Stomach (tissue), 19 donors: ENCODE measurements at regions of chr21 and their contacts with region 1.

Region 1: DNA sequence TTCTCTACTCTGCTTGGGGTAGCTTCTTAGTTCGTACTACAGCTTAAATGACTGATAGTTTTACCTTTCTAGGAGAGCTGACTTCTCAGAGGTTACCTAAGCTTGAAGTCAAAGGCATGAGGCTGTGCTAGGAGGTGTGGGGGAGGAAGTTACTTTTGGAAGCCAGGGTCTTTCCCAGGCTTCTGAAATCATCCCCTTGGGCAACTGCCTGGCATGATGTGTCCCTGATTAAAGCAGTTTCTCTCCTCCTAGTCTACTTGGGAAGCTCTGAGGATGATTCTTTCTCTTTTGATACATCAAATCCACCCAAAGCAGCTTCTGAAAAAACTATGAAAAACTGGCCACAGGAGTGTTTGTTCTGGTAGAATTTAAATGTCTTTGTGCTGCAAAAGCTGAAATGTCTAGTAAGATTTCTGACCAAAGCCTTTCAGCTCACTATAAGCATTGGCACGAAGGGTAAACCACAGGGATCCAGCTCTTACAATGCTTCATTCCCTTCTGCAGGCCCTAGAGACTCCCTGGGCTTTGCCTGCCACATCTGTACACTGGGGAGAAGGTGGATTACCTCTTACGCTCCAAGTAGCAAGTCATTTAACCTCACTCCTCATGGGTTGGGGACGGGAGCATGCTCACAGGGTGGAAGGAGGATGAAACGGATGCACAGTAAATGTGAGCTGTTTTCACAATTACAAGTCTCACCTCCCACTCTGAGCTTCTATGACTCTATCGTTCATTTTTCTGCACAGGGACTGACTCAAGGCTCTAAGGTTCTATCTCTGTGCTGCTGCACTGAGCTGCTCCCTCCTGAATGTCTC is 59.6 kb downstream of the RUNX1 start:
- DNase-seq: no peak
- H3K4me3 ChIP-seq: no peak overlapping the region
- H3K27ac ChIP-seq: peak overlapping the region in 1 of 5 donors; percentile 3
- H3K4me1 ChIP-seq: peaks cover 0 to 4% (median 0%) of the 10 kb centered on the region in 4 donors
- H3K27me3 ChIP-seq: no peaks in the 10 kb centered on the region
- CTCF ChIP-seq: no peak
- EP300 ChIP-seq: no peak
- POLR2A ChIP-seq: no peak

Region 2: GRCh38 chr21:35036465-35037383 is 47.2 kb after region 1 on chr21:
- intact Hi-C with region 1: loop called (anchors 5 kb)
- DNase-seq: no peak
- H3K4me3 ChIP-seq: no peak overlapping the region
- H3K27ac ChIP-seq: peak overlapping the region in 1 of 5 donors; percentile 42
- H3K4me1 ChIP-seq: peaks cover 4 to 19% (median 12%) of the 10 kb centered on the region in 4 donors
- H3K27me3 ChIP-seq: no peaks in the 10 kb centered on the region
- CTCF ChIP-seq: no peak
- EP300 ChIP-seq: no peak
- POLR2A ChIP-seq: no peak

Region 3: DNA sequence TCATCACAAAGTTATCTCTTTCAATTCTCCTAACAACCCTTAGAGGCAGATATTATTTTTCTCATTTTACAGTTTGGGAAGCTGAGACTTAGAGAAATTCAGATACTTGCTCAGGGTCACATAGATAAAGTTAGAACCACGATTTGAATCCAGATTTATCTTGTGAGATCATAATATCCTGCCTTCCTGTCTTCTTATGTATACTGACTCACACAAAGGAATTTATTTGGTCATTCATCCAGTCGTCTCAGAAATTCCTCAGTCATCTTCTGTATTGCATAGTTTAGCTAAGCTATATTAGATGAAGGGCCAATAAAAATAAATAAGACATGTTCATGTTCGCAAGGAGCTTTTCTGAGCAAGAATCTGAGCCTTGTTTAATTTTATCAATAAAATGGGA is 95.3 kb after region 1 on chr21:
- intact Hi-C with region 1: no loop called
- DNase-seq: no peak
- H3K4me3 ChIP-seq: no peak overlapping the region
- H3K27ac ChIP-seq: no peak overlapping the region
- H3K4me1 ChIP-seq: no peaks in the 10 kb centered on the region
- H3K27me3 ChIP-seq: no peaks in the 10 kb centered on the region
- CTCF ChIP-seq: no peak
- EP300 ChIP-seq: no peak
- POLR2A ChIP-seq: no peak

Region 4: DNA sequence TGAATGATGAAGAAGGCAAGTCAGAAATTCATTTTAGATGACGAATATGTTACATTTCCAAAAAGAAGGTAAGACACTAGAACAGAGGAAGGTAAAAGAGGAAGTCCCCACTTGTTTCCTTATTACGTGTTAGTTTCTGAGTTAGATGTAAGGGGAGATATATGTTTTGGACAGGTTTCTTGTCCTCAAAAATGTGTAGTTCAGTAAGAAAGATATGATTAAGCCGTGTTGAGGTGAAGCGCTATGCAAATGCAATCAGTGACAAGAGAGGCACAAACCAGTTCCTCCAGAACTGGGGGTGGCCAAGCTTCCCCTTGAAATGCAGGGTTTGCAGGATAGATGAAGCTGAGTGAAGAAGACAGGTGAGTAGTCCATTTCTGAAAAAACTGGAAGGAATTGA is 352.9 kb after region 1 on chr21:
- intact Hi-C with region 1: no loop called
- DNase-seq: no peak
- H3K4me3 ChIP-seq: no peak overlapping the region
- H3K27ac ChIP-seq: no peak overlapping the region
- H3K4me1 ChIP-seq: peaks cover 0 to 8% (median 2%) of the 10 kb centered on the region in 4 donors
- H3K27me3 ChIP-seq: no peaks in the 10 kb centered on the region
- CTCF ChIP-seq: no peak
- EP300 ChIP-seq: no peak
- POLR2A ChIP-seq: no peak